Naive thymus-derived CD4-positive, alpha-beta T cell (primary cell): ENCODE measurements at regions of chrX and their contacts with region 1.

Region 1: GRCh38 chrX:65667503-65668376 is at the start of gene MSN:
- DNase-seq: peak; percentile 46 to 81 (median 65)
- ATAC-seq: peak; percentile 92
- H3K4me3 ChIP-seq: peak within 1 kb of the TSS; percentile 81
- H3K4me3 Mint-ChIP-seq: peak within 1 kb of the TSS; percentile 88 to 99 (median 95)
- H3K27ac ChIP-seq: peak within 1 kb of the TSS; percentile 79
- H3K27ac Mint-ChIP-seq: peak within 1 kb of the TSS; percentile 80 to 97 (median 93)
- H3K4me1 ChIP-seq: peaks cover 11 to 12% of the 10 kb centered on the region in 2 donors
- H3K4me1 Mint-ChIP-seq: peaks cover 29 to 41% (median 34%) of the 10 kb centered on the region in 7 donors
- H3K27me3 ChIP-seq: no peaks in the 10 kb centered on the region
- H3K27me3 Mint-ChIP-seq: no peaks in the 10 kb centered on the region
- total RNA-seq, gene MSN: 267 to 635 (median 274) TPM

Region 2: GRCh38 chrX:65534450-65535292 is 133.1 kb before region 1 on chrX and contains the start of gene LAS1L:
- CTCF ChIA-PET with region 1: no interaction called
- POLR2A ChIA-PET with region 1: no interaction called
- intact Hi-C with region 1: loop called in 1 of 2 experiments (anchors 2 kb)
- DNase-seq: peak; percentile 71 to 94 (median 90)
- ATAC-seq: peak; percentile 99
- H3K4me3 ChIP-seq: peak within 1 kb of the TSS; percentile 96
- H3K4me3 Mint-ChIP-seq: peak within 1 kb of the TSS; percentile 97 to 100 (median 100)
- H3K27ac ChIP-seq: peak within 1 kb of the TSS; percentile 75
- H3K27ac Mint-ChIP-seq: peak within 1 kb of the TSS; percentile 94 to 100 (median 98)
- H3K4me1 ChIP-seq: peaks cover 10 to 13% of the 10 kb centered on the region in 2 donors
- H3K4me1 Mint-ChIP-seq: peaks cover 5 to 28% (median 16%) of the 10 kb centered on the region in 7 donors
- H3K27me3 ChIP-seq: no peaks in the 10 kb centered on the region
- H3K27me3 Mint-ChIP-seq: no peaks in the 10 kb centered on the region
- total RNA-seq, gene LAS1L: 37.2 to 48.9 (median 44.9) TPM

Region 3: GRCh38 chrX:65677954-65678469 is 10.3 kb after region 1 on chrX:
- CTCF ChIA-PET with region 1: interaction called, 3 read pairs
- POLR2A ChIA-PET with region 1: interaction called, 3 read pairs
- intact Hi-C with region 1: loop called in 1 of 2 experiments (anchors 2 kb)
- DNase-seq: no peak
- ATAC-seq: no peak
- H3K4me3 ChIP-seq: no peak overlapping the region
- H3K4me3 Mint-ChIP-seq: peak overlapping the region; percentile 41 to 94 (median 71)
- H3K27ac ChIP-seq: no peak overlapping the region
- H3K27ac Mint-ChIP-seq: peak overlapping the region in 8 of 9 donors; percentile 23 to 88 (median 82)
- H3K4me1 ChIP-seq: peaks cover 66 to 82% of the 10 kb centered on the region in 2 donors
- H3K4me1 Mint-ChIP-seq: peaks cover 40 to 95% (median 85%) of the 10 kb centered on the region in 7 donors
- H3K27me3 ChIP-seq: no peaks in the 10 kb centered on the region
- H3K27me3 Mint-ChIP-seq: no peaks in the 10 kb centered on the region

Region 4: DNA sequence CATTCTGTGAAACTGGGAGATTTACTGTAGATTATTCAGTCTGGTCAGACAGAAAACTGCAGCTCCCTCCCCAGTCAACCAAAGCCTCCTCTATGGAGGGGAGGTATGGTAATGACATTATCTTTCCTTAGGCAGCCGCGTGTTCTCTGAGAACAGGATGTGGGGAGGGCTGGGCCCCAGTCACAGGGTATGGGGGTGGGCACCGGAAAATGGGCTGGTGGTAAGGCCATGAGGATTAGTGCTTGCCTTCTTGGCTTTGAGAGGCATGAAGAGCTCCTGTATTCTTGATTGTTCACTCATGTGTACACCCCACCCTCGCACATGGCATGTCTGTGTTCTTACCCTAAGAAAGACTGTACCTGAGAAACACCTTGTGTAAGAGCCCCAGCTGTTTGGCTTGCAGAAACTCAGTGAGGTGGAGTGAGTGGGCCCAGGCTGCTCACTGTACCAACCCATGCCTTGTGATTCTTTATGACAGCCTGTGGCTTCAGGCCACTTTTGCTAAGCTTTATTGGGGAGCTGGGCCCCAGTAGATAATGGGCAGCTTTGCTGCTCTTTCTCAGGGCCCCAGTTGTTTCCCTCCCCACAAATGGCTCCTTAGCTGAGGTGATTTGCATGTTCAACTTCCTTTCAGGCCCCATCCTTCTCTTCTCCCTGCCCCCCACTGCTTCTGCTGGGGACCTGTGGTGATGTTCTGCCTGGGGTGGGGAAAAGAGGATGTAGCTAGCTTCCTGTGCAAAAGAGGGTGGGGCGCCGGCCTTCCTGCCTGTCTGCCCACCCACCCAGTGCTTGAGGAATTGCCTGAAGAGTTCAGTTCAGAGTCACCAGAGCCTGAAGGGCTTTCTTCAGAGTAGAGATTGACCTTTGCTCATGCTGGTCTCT is 30.4 kb after region 1 on chrX:
- CTCF ChIA-PET with region 1: interaction called, 10 read pairs
- POLR2A ChIA-PET with region 1: interaction called, 8 read pairs
- intact Hi-C with region 1: loop called (anchors 1 kb)
- DNase-seq: peak; percentile 8 to 81 (median 78)
- ATAC-seq: peak; percentile 84
- H3K4me3 ChIP-seq: peak overlapping the region; percentile 36
- H3K4me3 Mint-ChIP-seq: peak overlapping the region; percentile 73 to 93 (median 86)
- H3K27ac ChIP-seq: peak overlapping the region; percentile 68
- H3K27ac Mint-ChIP-seq: peak overlapping the region; percentile 91 to 98 (median 93)
- H3K4me1 ChIP-seq: peaks cover 70 to 77% of the 10 kb centered on the region in 2 donors
- H3K4me1 Mint-ChIP-seq: peaks cover 34 to 100% (median 85%) of the 10 kb centered on the region in 7 donors
- H3K27me3 ChIP-seq: no peaks in the 10 kb centered on the region
- H3K27me3 Mint-ChIP-seq: no peaks in the 10 kb centered on the region

Region 5: DNA sequence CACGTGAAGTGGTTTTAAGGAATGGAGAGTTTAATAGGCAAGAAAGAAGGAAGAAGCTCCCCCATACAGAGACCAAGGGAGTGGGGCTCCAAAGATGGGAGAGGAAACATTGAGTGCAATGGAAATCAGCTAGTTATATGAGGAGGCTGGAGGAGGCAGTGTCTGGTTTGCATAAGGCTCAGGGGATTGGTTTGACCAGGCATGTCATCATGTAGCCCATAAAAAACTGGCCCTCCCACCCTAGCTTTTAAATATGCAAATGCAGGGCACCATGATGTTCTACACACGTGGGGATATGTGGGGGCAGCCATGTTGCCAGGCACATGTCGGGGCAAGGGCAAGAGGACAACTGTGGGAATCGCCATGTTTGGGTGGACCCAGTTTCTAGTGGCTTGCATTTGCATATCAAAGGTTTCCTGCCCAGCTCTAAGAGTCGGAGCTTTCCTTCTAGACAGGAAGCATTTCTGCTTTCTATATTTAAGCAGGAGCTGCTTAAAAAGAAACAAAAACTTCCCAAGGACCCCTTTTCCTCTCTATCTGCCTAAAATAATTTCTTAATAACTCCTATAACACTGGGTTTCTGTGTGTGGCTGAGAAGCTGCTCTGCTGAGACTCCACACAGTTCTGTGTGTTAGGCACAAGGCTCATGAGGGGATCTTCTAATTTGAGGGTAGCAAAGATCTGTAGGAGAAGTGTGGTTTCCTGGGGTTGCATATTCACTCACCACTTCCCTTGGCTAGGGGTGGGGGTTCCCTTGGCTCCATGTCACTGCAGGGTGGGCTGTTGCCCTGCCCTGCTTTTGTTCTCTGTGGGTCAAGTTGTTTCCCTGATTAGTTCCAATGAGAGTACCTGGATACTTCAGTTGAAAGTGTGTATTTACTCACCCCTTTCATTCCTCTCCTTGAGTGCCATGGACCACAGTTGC is 258.6 kb after region 1 on chrX:
- CTCF ChIA-PET with region 1: no interaction called
- POLR2A ChIA-PET with region 1: no interaction called
- intact Hi-C with region 1: loop called in 1 of 2 experiments (anchors 10 kb)
- DNase-seq: peak in 7 of 9 donors; percentile 13 to 75 (median 54)
- ATAC-seq: peak; percentile 75
- H3K4me3 ChIP-seq: peak overlapping the region; percentile 31
- H3K4me3 Mint-ChIP-seq: peak overlapping the region; percentile 37 to 84 (median 70)
- H3K27ac ChIP-seq: peak overlapping the region; percentile 37
- H3K27ac Mint-ChIP-seq: peak overlapping the region; percentile 15 to 93 (median 73)
- H3K4me1 ChIP-seq: peaks cover 22 to 32% of the 10 kb centered on the region in 2 donors
- H3K4me1 Mint-ChIP-seq: peaks cover 33 to 71% (median 61%) of the 10 kb centered on the region in 7 donors
- H3K27me3 ChIP-seq: no peaks in the 10 kb centered on the region
- H3K27me3 Mint-ChIP-seq: no peaks in the 10 kb centered on the region